GM13977 (cell line): ENCODE measurements at regions of chr9 and their contacts with region 1.

Region 1: GRCh38 chr9:126773004-126773607 is 31.7 kb upstream of the ZBTB43 start:
- DNase-seq: no peak
- CTCF ChIP-seq: no peak

Region 2: DNA sequence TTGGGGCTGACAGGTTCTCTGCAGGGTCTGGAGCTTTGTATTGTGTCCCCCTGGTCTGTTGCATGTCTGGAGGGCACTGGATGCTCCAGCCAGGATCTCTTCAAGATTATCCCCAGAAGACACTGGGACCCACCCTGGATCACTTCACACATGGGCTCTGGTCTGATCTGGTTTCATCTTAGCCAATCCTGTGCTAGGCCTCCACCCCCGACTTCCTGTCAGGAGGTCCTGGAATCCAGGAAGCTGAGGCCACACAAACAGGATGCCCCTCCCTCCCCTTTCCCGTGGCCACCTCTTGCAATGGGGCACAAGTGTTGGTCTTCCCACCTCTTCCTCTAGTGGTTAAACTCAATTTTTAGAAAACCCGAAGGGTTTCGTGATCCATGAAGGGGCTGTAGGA is 689.1 kb before region 1 on chr9:
- in situ Hi-C with region 1: no loop called
- DNase-seq: no peak
- CTCF ChIP-seq: no peak

Region 3: GRCh38 chr9:126722252-126723078 is 50.6 kb before region 1 on chr9:
- in situ Hi-C with region 1: loop called (anchors 10 kb)
- DNase-seq: peak; percentile 88
- CTCF ChIP-seq: no peak